CD8-positive, alpha-beta T cell (primary cell): ENCODE measurements at regions of chr1 and their contacts with region 1.

Region 1: DNA sequence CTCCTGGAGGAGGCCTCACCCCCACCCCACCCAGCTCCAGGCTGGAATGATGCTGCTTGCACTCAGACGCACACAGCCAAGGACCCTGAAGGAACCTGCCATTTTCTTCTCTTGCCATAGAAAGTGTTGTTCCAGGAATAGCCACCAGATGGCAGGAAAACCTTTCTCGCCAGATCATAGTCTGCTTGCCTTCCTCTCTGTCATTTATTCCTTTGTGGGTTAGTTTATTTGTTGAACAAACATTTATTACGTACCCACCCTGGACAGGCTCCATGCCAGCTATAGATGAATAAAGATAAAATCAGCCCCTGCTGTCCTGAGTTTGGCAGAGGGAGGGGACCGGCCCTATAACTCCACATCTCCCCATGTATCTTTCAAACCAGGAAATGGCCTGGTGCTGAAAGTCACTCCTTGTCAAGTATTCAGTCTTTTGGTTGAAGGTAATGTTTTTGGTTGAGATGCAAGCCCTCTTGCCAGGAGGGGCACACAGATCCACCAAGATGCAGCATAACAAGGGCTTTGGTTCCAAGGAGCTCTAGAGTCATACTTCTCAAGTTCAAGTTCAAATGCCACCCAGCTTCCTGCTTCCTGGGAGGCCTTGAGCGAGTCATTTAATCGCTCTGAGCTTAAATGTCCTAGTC is 7.0 kb upstream of the KCNC4 start:
- DNase-seq: peak; percentile 43 to 86 (median 68)
- ATAC-seq: peak; percentile 80
- H3K4me3 ChIP-seq: no peak overlapping the region
- H3K4me3 Mint-ChIP-seq: no peak overlapping the region
- H3K27ac ChIP-seq: peak overlapping the region in 1 of 2 experiments; percentile 64
- H3K27ac Mint-ChIP-seq: peak overlapping the region; percentile 90
- H3K4me1 ChIP-seq: peaks cover 22% of the 10 kb centered on the region
- H3K4me1 Mint-ChIP-seq: peaks cover 25% of the 10 kb centered on the region
- H3K27me3 ChIP-seq: no peaks in the 10 kb centered on the region
- H3K27me3 Mint-ChIP-seq: no peaks in the 10 kb centered on the region
- CTCF ChIP-seq: peak; percentile 82

Region 2: DNA sequence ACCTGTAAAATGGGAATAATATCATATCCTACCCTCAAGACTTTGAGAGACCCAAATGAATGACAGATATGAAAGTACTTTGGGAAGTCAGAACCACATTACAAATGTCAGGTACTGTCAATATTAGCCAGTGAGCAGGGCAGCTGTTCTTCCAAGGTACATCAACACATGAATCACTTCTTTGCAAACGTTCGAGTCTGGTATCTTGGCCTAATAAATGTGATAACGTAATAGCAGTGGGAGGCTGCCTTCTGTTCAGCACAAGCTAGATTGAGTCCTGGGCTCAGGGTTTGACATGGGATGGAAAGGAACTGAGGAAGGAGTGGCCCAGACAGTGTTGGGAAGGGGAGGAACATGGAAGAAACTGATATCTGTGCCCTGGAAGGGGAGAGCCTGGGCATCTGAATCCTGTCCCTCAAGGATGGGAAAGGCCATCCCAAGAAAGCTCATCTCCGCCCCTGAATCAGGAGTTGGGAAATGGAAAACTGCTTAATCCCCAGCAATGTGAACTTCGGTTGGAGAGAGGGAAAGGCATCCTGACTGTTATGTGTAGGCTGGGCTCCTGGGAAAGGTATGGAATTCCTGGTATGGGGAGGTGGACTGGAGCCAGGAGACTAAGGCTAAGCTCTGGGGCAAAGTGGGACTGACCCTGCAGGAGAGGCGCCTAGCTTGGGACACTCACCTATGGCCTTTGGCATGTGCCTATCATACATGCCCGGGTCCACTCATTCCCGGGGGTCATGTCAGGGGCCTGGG is 21.3 kb after region 1 on chr1:
- CTCF ChIA-PET with region 1: interaction called, 13 read pairs
- POLR2A ChIA-PET with region 1: no interaction called
- intact Hi-C with region 1: loop called in 1 of 2 experiments (anchors 1 kb)
- DNase-seq: no peak
- ATAC-seq: no peak
- H3K4me3 ChIP-seq: no peak overlapping the region
- H3K4me3 Mint-ChIP-seq: no peak overlapping the region
- H3K27ac ChIP-seq: no peak overlapping the region
- H3K27ac Mint-ChIP-seq: no peak overlapping the region
- H3K4me1 ChIP-seq: no peaks in the 10 kb centered on the region
- H3K4me1 Mint-ChIP-seq: no peaks in the 10 kb centered on the region
- H3K27me3 ChIP-seq: no peaks in the 10 kb centered on the region
- H3K27me3 Mint-ChIP-seq: no peaks in the 10 kb centered on the region
- CTCF ChIP-seq: no peak

Region 3: DNA sequence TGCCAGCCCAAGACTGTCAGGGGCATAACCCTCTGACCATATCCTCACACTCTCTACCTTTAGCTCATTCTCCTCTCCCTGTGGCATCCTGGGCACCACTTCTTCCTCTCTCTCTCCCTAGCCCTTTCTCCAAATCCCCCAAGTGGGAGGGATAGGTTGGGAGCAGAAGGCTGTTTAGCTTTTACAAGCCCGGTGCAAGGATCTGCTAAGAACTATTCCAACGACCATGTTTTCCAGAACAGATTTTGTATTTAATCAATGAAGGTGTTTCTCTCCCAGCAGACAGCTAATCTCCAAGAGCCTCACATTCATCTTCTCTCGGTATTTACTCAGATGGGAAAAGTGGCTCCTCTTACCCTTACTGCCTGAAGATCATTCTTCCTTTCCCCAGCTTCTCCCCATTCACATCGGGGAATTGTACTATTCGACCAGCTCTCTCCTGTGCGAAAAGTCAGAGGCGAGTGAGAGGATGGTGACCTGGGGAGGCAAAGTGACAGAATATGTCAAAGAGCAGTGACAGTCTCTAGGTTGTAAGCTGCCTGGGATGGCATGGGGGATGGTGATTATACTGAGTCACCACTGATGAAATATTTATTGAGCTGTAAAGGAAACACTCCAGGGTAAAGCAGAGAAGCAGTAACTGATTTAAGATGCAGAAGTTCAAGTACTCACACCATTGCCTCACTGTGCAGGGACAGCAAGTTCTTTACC is 89.0 kb after region 1 on chr1:
- CTCF ChIA-PET with region 1: interaction called, 11 read pairs
- POLR2A ChIA-PET with region 1: no interaction called
- intact Hi-C with region 1: no loop called
- DNase-seq: no peak
- ATAC-seq: no peak
- H3K4me3 ChIP-seq: no peak overlapping the region
- H3K4me3 Mint-ChIP-seq: no peak overlapping the region
- H3K27ac ChIP-seq: no peak overlapping the region
- H3K27ac Mint-ChIP-seq: no peak overlapping the region
- H3K4me1 ChIP-seq: no peaks in the 10 kb centered on the region
- H3K4me1 Mint-ChIP-seq: no peaks in the 10 kb centered on the region
- H3K27me3 ChIP-seq: no peaks in the 10 kb centered on the region
- H3K27me3 Mint-ChIP-seq: no peaks in the 10 kb centered on the region
- CTCF ChIP-seq: no peak

Region 4: GRCh38 chr1:110328274-110328673 is 125.1 kb after region 1 on chr1:
- CTCF ChIA-PET with region 1: interaction called, 135 read pairs
- POLR2A ChIA-PET with region 1: no interaction called
- intact Hi-C with region 1: no loop called
- DNase-seq: no peak
- ATAC-seq: no peak
- H3K4me3 ChIP-seq: no peak overlapping the region
- H3K4me3 Mint-ChIP-seq: no peak overlapping the region
- H3K27ac ChIP-seq: no peak overlapping the region
- H3K27ac Mint-ChIP-seq: no peak overlapping the region
- H3K4me1 ChIP-seq: no peaks in the 10 kb centered on the region
- H3K4me1 Mint-ChIP-seq: no peaks in the 10 kb centered on the region
- H3K27me3 ChIP-seq: no peaks in the 10 kb centered on the region
- H3K27me3 Mint-ChIP-seq: no peaks in the 10 kb centered on the region
- CTCF ChIP-seq: no peak

Region 5: GRCh38 chr1:110455151-110455550 is 252.0 kb after region 1 on chr1:
- CTCF ChIA-PET with region 1: interaction called, 313 read pairs
- POLR2A ChIA-PET with region 1: interaction called, 3 read pairs
- intact Hi-C with region 1: loop called (anchors 1 kb)
- DNase-seq: no peak
- ATAC-seq: no peak
- H3K4me3 ChIP-seq: no peak overlapping the region
- H3K4me3 Mint-ChIP-seq: no peak overlapping the region
- H3K27ac ChIP-seq: no peak overlapping the region
- H3K27ac Mint-ChIP-seq: no peak overlapping the region
- H3K4me1 ChIP-seq: no peaks in the 10 kb centered on the region
- H3K4me1 Mint-ChIP-seq: no peaks in the 10 kb centered on the region
- H3K27me3 ChIP-seq: no peaks in the 10 kb centered on the region
- H3K27me3 Mint-ChIP-seq: peaks cover 4% of the 10 kb centered on the region
- CTCF ChIP-seq: no peak